ENCODE measurements at regions of chr5 and their contacts with region 1.

Region 1: DNA sequence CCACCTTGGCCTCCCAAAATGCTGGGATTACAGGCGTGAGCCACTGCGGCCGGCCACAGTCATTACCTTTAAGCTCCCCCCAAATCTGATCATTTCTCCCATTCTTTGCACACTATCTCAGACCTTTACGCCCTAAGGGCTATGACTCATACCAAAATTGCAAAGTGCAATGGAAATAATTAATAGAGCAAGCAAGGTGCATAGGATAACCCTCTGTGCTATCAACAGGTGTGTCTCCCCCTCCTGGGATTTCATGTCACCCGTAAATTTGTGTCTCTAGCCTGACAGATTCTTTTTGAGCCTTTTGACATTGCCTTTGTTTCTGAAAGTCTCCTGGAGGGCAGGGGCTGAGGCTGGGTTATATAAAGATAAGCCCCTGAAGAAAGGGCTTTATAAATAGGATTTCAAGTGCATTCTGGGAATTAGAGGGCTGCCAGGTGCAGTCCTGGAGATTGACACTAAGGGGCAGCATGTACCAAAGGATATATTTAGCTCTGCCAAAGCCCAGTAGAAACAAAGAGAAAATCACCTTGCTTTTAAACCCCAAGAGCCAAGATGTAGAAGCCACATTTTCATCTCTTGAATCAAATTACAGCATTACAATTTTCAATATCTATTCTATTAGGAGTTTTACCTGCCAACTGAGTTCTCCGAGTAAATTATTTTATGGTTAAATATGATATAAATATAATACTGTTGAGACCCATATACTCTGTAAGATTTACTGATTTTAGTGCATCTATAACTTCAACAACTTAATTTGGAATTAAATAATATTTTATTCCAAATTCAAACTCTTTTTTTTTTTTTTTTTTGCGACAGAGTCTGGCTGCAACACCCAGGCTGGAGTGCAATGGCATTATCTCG is 18.2 kb downstream of the S100Z start:
- DNase-seq: peak; percentile 58
- H3K4me3 ChIP-seq: no peak overlapping the region
- H3K27ac ChIP-seq: peak overlapping the region; percentile 26
- H3K4me1 ChIP-seq: peaks cover 7% of the 10 kb centered on the region
- H3K27me3 ChIP-seq: no peaks in the 10 kb centered on the region
- CTCF ChIP-seq: peak; percentile 88

Region 2: DNA sequence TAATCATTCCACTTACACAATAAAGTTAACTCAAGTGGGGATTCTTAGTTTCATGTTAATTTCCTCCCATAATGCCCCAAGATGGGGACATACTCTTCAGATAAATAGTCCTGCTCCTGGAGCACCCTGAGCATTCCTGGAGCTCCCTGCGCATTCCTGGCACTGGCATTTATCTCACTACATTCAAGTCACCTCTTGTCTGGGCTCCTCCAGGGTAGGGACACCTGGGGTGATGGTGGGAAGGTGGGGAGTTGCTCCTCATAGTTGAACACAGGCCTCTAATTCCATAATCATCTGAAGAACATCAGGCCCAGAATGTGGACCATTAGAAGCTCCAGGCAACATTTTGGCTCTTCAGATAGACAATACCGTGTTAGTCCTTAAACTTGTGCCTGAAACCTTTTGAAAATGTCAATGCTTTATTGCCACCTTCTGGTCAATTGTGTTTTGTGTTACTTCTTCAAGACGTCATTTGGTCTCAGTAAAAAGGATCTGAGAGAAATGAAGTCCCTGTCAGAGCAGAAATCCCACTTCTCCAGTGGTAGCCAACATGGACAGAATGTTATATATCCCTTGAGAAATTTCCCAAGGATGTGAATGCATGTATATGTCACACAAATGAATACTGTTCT is 148.0 kb after region 1 on chr5:
- intact Hi-C with region 1: loop called (anchors 5 kb)
- DNase-seq: no peak
- H3K4me3 ChIP-seq: no peak overlapping the region
- H3K27ac ChIP-seq: no peak overlapping the region
- H3K4me1 ChIP-seq: no peaks in the 10 kb centered on the region
- H3K27me3 ChIP-seq: peaks cover 8% of the 10 kb centered on the region
- CTCF ChIP-seq: peak; percentile 49